Body of pancreas (tissue), 4 donors: ENCODE measurements at regions of chr1 and their contacts with region 1.

Region 1: GRCh38 chr1:84122780-84123382 is 21.2 kb upstream of the PRKACB start:
- DNase-seq: peak; percentile 44 to 75 (median 64)
- ATAC-seq: no peak
- H3K4me3 ChIP-seq: no peak overlapping the region
- H3K27ac ChIP-seq: no peak overlapping the region
- H3K4me1 ChIP-seq: no peaks in the 10 kb centered on the region
- H3K27me3 ChIP-seq: no peaks in the 10 kb centered on the region
- CTCF ChIP-seq: peak; percentile 37 to 75 (median 67)
- POLR2A ChIP-seq: no peak

Region 2: GRCh38 chr1:83931658-83932253 is 191.1 kb before region 1 on chr1:
- intact Hi-C with region 1: loop called (anchors 10 kb)
- DNase-seq: peak; percentile 14 to 51 (median 28)
- ATAC-seq: peak; percentile 67
- H3K4me3 ChIP-seq: no peak overlapping the region
- H3K27ac ChIP-seq: no peak overlapping the region
- H3K4me1 ChIP-seq: peaks cover 5% of the 10 kb centered on the region
- H3K27me3 ChIP-seq: no peaks in the 10 kb centered on the region
- CTCF ChIP-seq: peak; percentile 51 to 81 (median 77)
- POLR2A ChIP-seq: no peak

Region 3: GRCh38 chr1:84208935-84209334 is 86.1 kb after region 1 on chr1:
- intact Hi-C with region 1: no loop called
- DNase-seq: no peak
- ATAC-seq: no peak
- H3K4me3 ChIP-seq: no peak overlapping the region
- H3K27ac ChIP-seq: no peak overlapping the region
- H3K4me1 ChIP-seq: no peaks in the 10 kb centered on the region
- H3K27me3 ChIP-seq: no peaks in the 10 kb centered on the region
- CTCF ChIP-seq: no peak
- POLR2A ChIP-seq: no peak

Region 4: DNA sequence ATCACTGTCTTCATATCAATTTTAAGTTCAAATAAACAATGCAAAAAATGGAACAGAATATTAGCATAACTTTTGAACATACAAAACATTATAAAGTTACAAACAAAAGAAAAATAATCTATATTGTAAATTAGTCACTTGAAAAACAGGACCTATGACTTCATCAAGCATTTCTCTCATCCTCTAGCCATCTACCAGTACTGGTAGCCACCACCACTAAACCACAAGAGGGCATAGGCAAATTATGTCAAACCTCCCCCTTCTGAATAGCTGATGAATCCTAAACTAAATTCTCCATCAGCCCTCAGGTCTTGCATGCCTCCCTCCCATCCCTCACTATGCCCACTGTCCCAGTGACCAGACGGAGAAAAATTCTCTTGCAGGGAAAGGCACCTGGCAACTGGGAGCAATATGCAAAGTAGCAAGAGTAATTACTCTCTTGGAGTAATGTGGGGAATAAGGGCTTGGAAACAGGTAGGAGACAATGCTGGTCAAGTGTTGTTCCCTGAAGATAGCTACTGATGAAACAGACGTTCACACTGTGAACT is 530.3 kb after region 1 on chr1:
- intact Hi-C with region 1: no loop called
- DNase-seq: no peak
- ATAC-seq: no peak
- H3K4me3 ChIP-seq: no peak overlapping the region
- H3K27ac ChIP-seq: no peak overlapping the region
- H3K4me1 ChIP-seq: peaks cover 3% of the 10 kb centered on the region
- H3K27me3 ChIP-seq: no peaks in the 10 kb centered on the region
- CTCF ChIP-seq: no peak
- POLR2A ChIP-seq: no peak